ENCODE measurements at regions of chr11 and their contacts with region 1.

Region 1: DNA sequence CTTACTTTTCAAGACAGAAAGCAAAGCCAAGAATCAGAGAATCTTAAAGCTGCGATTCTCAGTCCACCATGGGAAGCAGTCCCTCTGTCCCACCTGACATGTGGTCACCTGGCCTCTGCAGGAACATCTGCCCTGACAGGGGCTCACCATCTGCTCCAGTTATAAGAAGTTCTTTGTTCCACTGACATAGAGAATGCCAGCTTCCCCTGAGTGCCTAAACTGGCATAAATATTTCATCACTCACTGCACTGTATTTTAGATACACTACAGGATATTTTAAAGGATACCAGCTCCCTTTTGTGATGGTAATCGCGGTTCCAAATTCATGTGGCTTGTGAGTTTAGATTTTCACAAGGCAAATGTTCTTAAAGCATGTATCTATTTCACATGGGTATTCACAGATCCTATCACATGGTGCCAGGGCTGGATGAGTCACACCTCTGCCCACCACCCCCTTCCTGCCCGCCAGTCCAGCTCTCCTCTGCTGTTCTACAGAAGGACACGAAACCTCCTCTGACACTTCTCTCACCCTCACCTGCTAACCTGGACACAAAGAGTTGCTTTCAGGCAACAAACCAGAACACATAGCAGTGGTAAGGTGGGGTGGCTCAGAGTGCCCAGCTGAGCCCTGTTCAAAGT is 105.5 kb downstream of the KCNC1 start:
- DNase-seq: peak; percentile 3
- H3K4me3 ChIP-seq: no peak overlapping the region
- H3K27ac ChIP-seq: no peak overlapping the region
- H3K4me1 ChIP-seq: no peaks in the 10 kb centered on the region
- H3K27me3 ChIP-seq: no peaks in the 10 kb centered on the region
- CTCF ChIP-seq: no peak

Region 2: GRCh38 chr11:17765356-17766072 is 74.6 kb before region 1 on chr11:
- CTCF ChIA-PET with region 1: no interaction called
- POLR2A ChIA-PET with region 1: no interaction called
- intact Hi-C with region 1: loop called (anchors 5 kb)
- DNase-seq: no peak
- H3K4me3 ChIP-seq: no peak overlapping the region
- H3K27ac ChIP-seq: no peak overlapping the region
- H3K4me1 ChIP-seq: no peaks in the 10 kb centered on the region
- H3K27me3 ChIP-seq: no peaks in the 10 kb centered on the region
- CTCF ChIP-seq: no peak

Region 3: GRCh38 chr11:18105802-18106574 is 265.9 kb after region 1 on chr11 and contains the start of gene SAAL1:
- CTCF ChIA-PET with region 1: no interaction called
- POLR2A ChIA-PET with region 1: no interaction called
- intact Hi-C with region 1: no loop called
- DNase-seq: peak; percentile 88
- H3K4me3 ChIP-seq: peak within 1 kb of the TSS; percentile 93
- H3K27ac ChIP-seq: peak within 1 kb of the TSS; percentile 74
- H3K4me1 ChIP-seq: no peaks in the 10 kb centered on the region
- H3K27me3 ChIP-seq: no peaks in the 10 kb centered on the region
- CTCF ChIP-seq: peak; percentile 88
- total RNA-seq, gene SAAL1: 37.7 and 39.5 TPM in 2 replicates

Measured in A673 (cell line).